ENCODE measurements at regions of chr1 and their contacts with region 1.

Region 1: DNA sequence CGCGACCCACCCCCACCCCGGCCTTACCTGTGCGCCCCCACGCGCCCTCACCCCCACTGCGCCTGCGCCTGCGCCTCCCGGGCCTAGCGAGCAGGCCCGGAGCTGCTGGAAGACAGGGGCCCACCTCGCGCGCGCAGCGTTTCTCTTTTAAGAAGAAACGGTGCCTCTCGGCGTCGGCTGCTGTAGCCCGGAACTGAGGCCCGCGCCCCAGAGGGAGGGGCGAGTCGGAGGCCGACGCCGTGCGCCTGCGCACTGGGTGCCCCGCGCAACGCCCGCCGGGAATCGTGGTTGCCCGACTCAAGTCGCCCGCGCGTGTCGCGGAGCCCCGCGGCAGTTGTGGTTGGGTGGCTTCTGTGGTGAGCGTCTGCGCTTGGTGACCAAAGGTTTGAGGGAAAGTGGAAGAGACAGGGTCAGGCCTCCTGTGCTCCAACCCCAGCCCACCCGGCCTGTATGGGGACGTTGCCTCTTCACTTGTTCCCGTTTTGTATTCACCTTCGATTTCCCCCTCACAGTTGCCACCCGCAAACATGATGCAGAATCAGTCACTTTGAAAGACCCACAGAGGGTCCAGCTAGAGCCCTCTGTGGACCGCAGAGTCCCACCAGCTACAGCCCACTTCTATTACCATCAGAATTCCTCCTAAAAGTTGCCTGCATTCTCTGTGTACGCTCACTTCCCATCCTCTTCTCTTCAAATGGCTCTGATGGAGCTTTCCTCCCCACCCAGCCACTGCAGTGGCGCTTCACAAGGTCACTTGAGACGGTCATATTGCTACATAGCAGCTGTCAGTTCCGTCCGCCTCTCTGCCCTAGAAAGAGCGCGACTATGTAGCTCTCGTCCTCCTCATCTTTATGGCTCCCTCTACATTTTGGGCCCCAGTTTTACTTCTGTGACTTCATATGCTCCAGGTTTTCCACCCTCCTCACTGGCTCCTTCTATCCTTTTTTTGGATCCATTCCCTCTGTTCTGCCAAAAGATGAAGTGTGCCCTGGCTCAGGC is at the start of gene ZNF692:
- DNase-seq: peak; percentile 100
- H3K4me3 Mint-ChIP-seq: peak within 1 kb of the TSS; percentile 77
- H3K27ac Mint-ChIP-seq: peak within 1 kb of the TSS; percentile 70
- H3K4me1 Mint-ChIP-seq: peaks cover 31% of the 10 kb centered on the region
- H3K27me3 Mint-ChIP-seq: no peaks in the 10 kb centered on the region
- CTCF ChIP-seq: no peak
- total RNA-seq, gene ZNF692: 88.8 and 103 TPM in 2 replicates

Region 2: GRCh38 chr1:248837794-248838356 is 21.3 kb before region 1 on chr1 and contains the start of gene ZNF672:
- CTCF ChIA-PET with region 1: interaction called, 44 read pairs
- POLR2A ChIA-PET with region 1: interaction called, 234 read pairs
- intact Hi-C with region 1: loop called (anchors 1 kb)
- DNase-seq: peak; percentile 100
- H3K4me3 Mint-ChIP-seq: no peak within 1 kb of the TSS
- H3K27ac Mint-ChIP-seq: no peak within 1 kb of the TSS
- H3K4me1 Mint-ChIP-seq: peaks cover 20% of the 10 kb centered on the region
- H3K27me3 Mint-ChIP-seq: no peaks in the 10 kb centered on the region
- CTCF ChIP-seq: no peak
- total RNA-seq, gene ZNF672: 35.8 and 36.2 TPM in 2 replicates

Region 3: DNA sequence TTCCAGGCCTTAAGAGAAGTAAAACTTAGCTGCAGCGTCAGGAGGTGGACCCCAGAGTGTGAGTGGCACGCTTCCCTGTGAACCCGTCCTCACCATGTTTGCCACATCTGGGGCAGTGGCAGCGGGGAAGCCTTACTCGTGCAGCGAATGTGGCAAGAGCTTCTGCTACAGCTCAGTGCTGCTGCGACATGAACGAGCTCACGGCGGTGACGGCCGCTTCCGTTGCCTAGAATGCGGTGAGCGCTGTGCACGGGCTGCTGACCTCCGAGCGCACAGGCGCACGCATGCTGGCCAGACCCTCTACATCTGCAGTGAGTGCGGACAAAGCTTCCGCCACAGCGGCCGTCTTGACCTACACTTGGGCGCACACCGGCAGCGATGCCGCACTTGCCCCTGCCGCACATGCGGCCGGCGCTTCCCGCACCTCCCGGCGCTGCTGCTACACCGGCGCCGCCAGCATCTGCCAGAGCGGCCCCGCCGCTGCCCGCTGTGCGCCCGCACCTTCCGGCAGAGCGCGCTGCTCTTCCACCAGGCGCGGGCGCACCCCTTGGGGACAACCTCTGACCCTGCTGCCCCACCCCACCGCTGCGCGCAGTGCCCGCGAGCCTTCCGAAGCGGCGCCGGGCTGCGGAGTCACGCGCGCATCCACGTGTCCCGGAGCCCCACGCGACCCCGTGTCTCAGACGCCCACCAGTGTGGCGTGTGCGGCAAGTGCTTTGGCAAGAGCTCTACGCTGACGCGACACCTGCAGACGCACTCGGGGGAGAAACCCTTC is 11.8 kb before region 1 on chr1:
- CTCF ChIA-PET with region 1: interaction called, 44 read pairs
- POLR2A ChIA-PET with region 1: interaction called, 234 read pairs
- intact Hi-C with region 1: no loop called
- DNase-seq: no peak
- H3K4me3 Mint-ChIP-seq: no peak overlapping the region
- H3K27ac Mint-ChIP-seq: no peak overlapping the region
- H3K4me1 Mint-ChIP-seq: peaks cover 7% of the 10 kb centered on the region
- H3K27me3 Mint-ChIP-seq: no peaks in the 10 kb centered on the region
- CTCF ChIP-seq: no peak

Region 4: DNA sequence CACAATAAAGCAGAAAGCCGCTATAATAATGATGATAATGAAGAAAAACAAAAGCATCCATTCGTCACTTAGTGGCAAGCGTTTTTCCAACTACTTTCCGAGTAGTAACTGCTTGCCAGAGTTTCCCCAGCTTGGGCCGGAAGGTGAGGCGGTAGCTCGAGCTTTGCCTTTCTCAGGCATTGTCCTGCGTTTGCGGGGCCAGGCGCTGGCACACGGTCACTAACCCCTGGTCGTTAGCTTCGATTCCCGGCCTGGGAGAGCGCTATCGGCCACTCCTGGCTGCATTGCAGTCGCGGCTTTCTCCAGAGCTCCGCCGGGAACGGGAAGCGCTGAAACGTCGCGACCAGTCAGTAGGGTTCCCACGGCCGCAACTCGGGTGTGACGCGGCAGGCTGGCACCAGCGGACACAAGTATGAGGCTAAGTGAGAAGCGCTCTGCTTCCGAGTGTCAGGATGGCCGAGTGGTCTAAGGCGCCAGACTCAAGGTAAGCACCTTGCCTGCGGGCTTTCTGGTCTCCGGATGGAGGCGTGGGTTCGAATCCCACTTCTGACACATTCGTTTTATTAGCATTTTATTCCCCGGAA is 14.3 kb after region 1 on chr1:
- CTCF ChIA-PET with region 1: interaction called, 21 read pairs
- POLR2A ChIA-PET with region 1: interaction called, 140 read pairs
- intact Hi-C with region 1: loop called (anchors 1 kb)
- DNase-seq: peak; percentile 100
- H3K4me3 Mint-ChIP-seq: peak overlapping the region; percentile 94
- H3K27ac Mint-ChIP-seq: peak overlapping the region; percentile 97
- H3K4me1 Mint-ChIP-seq: peaks cover 19% of the 10 kb centered on the region
- H3K27me3 Mint-ChIP-seq: peaks cover 12% of the 10 kb centered on the region
- CTCF ChIP-seq: no peak

Region 5: DNA sequence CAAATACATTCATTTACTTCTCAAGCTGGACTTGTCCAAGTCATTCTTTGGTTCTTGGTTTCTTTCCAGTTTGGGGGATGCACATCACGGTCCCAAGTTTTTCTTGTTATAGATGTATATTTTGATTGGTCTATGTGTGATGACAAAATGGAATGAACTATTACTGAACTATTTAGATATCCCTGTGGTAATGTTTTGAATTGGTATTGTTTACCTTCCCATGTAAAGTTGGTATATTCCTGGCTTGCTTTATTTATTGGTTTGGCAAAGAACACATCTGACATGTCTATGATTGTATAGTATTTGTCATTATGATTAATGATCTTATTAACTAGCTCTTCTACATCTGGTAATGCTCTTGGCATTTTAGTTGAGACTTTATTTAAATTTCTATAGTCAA is 22.1 kb after region 1 on chr1:
- CTCF ChIA-PET with region 1: interaction called, 4 read pairs
- POLR2A ChIA-PET with region 1: interaction called, 13 read pairs
- intact Hi-C with region 1: no loop called
- DNase-seq: no peak
- H3K4me3 Mint-ChIP-seq: no peak overlapping the region
- H3K27ac Mint-ChIP-seq: no peak overlapping the region
- H3K4me1 Mint-ChIP-seq: peaks cover 4% of the 10 kb centered on the region
- H3K27me3 Mint-ChIP-seq: peaks cover 24% of the 10 kb centered on the region
- CTCF ChIP-seq: no peak

Region 6: DNA sequence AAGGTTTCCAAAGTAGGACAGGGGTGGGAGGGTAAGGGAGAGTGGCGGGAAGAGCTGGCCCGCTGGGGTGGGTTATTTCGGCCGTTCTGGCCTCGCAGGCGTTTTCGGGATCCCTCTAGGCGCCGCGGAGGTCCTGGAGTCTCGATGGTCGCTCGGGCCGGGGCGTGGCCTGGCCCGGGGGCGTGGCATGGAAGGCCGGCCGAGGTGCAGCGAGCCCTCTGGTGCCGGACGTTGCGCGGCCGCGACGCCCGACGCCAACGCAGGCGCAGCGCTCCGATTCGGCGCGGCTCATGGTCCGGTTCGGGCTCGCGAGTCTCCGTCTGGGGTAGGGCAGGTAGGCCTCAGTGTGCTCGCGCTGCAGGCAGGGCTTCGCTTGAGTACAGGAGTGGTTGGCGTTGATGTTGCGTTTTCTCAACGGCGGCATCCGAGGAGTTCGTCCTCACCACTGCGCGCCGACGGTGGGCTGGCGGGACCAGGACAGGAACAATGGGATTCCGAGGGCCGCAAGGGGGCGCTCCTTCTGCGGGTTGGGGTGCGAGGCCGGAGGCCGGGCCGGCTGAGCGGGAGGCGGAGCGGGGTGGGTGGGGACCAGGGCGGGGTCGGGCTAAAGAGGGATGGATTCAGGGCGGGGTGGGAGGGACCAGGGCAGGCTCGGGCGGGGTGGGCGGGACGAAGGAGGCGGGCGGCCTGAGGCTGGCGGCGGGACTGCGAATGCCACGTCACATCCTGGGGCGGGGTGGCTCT is 47.0 kb after region 1 on chr1 and contains the start of gene PGBD2:
- CTCF ChIA-PET with region 1: interaction called, 11 read pairs
- POLR2A ChIA-PET with region 1: interaction called, 16 read pairs
- intact Hi-C with region 1: loop called (anchors 1 kb)
- DNase-seq: peak; percentile 96
- H3K4me3 Mint-ChIP-seq: peak within 1 kb of the TSS; percentile 89
- H3K27ac Mint-ChIP-seq: peak within 1 kb of the TSS; percentile 91
- H3K4me1 Mint-ChIP-seq: peaks cover 27% of the 10 kb centered on the region
- H3K27me3 Mint-ChIP-seq: peaks cover 39% of the 10 kb centered on the region
- CTCF ChIP-seq: peak; percentile 86
- total RNA-seq, gene PGBD2: 5.2 and 5.9 TPM in 2 replicates

Region 7: DNA sequence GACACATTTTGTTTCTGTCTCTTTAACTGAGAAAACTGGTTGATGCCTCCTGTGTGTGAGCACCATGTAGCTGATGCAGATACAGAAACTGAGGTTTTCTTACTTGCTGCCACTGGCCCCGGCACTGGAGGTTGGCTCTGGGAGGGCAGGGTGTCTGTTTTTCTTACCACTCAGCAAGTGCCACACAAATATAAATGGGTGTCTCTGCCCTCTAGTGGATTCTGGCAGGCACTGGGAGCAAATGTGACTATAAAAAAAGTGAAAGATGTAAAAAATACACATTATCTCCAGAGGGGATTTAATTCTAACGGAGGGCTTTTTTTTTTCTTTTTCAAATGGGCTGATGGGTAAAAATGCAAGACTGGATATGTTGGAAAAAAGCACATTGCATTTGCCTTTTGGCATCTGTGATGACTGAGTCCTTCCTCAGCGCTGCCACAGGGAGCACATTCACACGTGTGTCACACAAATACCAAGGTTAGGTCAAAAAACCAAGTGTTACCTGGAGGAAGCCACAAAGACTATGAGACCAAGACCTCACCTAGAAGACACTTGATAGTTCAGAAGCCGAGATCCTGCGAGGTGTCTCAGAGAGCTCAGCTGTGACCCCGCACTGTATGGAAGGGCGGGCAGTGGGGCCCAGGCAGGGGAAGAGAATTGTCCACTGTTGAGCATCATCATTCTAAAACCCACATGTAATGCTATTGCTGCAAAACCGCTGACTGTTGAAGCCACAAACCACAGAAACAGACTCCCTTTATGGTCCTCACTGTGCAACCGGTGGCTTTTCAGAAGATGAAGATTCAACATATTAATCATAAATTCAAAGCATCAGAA is 65.7 kb after region 1 on chr1:
- CTCF ChIA-PET with region 1: interaction called, 16 read pairs
- POLR2A ChIA-PET with region 1: interaction called, 6 read pairs
- intact Hi-C with region 1: loop called (anchors 1 kb)
- DNase-seq: peak; percentile 85
- H3K4me3 Mint-ChIP-seq: no peak overlapping the region
- H3K27ac Mint-ChIP-seq: no peak overlapping the region
- H3K4me1 Mint-ChIP-seq: peaks cover 20% of the 10 kb centered on the region
- H3K27me3 Mint-ChIP-seq: no peaks in the 10 kb centered on the region
- CTCF ChIP-seq: peak; percentile 89